ENCODE measurements at regions of chr18 and their contacts with region 1.

Region 1: GRCh38 chr18:62584241-62585120 is 61.7 kb downstream of the ZCCHC2 start:
- DNase-seq: peak; percentile 93
- H3K4me3 Mint-ChIP-seq: peak overlapping the region; percentile 2
- H3K27ac Mint-ChIP-seq: peak overlapping the region; percentile 92
- H3K4me1 Mint-ChIP-seq: peaks cover 42% of the 10 kb centered on the region
- H3K27me3 Mint-ChIP-seq: no peaks in the 10 kb centered on the region

Region 2: DNA sequence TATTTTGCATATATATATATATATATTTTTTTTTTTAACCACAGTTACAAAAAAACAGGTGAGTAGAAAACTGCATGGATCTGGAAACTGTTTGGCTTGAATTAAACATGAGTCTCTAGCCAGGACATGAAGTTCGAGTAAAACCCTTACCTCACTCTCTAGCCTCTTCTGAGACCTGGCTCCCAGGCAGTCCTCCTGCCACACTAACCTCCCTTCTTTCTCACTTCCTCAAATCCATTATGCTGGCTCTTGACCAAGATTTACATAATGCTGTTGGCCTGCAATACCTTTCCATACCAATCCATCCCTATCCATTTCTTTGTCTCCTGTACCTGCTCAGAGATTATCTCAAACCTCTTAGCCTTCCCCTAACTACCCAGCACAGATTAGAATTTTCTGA is 431.6 kb before region 1 on chr18:
- CTCF ChIA-PET with region 1: no interaction called
- intact Hi-C with region 1: no loop called
- DNase-seq: no peak
- H3K4me3 Mint-ChIP-seq: no peak overlapping the region
- H3K27ac Mint-ChIP-seq: no peak overlapping the region
- H3K4me1 Mint-ChIP-seq: no peaks in the 10 kb centered on the region
- H3K27me3 Mint-ChIP-seq: no peaks in the 10 kb centered on the region

Region 3: GRCh38 chr18:62186774-62187542 is 397.5 kb before region 1 on chr18 and contains the starts of genes PIGN and RELCH:
- CTCF ChIA-PET with region 1: interaction called, 3 read pairs
- intact Hi-C with region 1: loop called (anchors 1 kb)
- DNase-seq: peak; percentile 97
- H3K4me3 Mint-ChIP-seq: peak within 1 kb of the TSS; percentile 99
- H3K27ac Mint-ChIP-seq: peak within 1 kb of the TSS; percentile 90
- H3K4me1 Mint-ChIP-seq: peaks cover 45% of the 10 kb centered on the region
- H3K27me3 Mint-ChIP-seq: no peaks in the 10 kb centered on the region
- total RNA-seq, gene PIGN: 21.2 to 22.6 TPM
- total RNA-seq, gene RELCH: 15.7 to 16.3 TPM

Region 4: GRCh38 chr18:62324917-62325805 is 259.3 kb before region 1 on chr18 and contains the start of gene TNFRSF11A:
- CTCF ChIA-PET with region 1: interaction called, 5 read pairs
- intact Hi-C with region 1: loop called (anchors 1 kb)
- DNase-seq: peak; percentile 73
- H3K4me3 Mint-ChIP-seq: peak within 1 kb of the TSS; percentile 77
- H3K27ac Mint-ChIP-seq: peak within 1 kb of the TSS; percentile 28
- H3K4me1 Mint-ChIP-seq: peaks cover 19% of the 10 kb centered on the region
- H3K27me3 Mint-ChIP-seq: peaks cover 70% of the 10 kb centered on the region
- total RNA-seq, gene TNFRSF11A: 3.1 to 3.5 TPM

Region 5: DNA sequence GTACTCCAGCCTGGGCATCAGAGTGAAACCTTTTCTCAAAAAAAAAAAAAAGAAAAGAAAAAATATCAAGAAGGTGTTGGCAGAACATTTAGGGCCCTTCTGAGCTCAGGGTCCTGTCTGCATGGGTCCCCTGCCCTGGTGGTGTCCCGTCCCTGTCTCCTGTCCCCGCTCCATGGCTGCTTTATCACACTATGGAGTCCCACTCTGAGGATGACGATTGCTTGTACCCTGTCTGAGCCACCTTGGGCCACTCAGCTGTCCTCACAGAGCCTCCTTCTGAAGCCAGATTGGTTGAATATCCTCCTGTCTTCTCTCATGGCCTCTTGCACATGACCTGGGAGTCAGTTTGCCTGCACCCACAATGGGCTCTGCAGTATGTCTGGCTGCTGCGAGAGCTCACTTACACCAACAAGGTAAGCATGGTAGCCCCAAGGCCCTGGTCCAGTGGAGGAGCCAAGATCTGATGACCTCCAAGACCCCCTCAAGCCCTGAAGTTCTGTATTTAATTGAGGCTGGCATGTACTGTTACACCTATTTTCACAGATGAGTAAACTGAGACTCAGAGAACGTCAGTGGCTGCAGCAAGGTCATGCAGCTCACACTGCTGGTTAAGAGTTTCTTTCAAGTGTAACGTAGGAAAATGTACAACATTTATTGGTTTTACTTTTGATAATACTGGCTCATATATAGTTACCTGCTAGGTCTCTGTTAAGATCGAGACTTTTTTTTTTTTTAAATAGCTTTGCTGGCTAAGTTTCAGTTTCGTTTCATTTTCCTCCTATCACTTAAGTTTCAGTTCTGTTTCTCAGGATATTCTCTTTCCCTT is 78.6 kb before region 1 on chr18:
- CTCF ChIA-PET with region 1: no interaction called
- intact Hi-C with region 1: loop called (anchors 1 kb)
- DNase-seq: peak; percentile 63
- H3K4me3 Mint-ChIP-seq: peak overlapping the region; percentile 55
- H3K27ac Mint-ChIP-seq: peak overlapping the region; percentile 86
- H3K4me1 Mint-ChIP-seq: peaks cover 20% of the 10 kb centered on the region
- H3K27me3 Mint-ChIP-seq: no peaks in the 10 kb centered on the region

Region 6: DNA sequence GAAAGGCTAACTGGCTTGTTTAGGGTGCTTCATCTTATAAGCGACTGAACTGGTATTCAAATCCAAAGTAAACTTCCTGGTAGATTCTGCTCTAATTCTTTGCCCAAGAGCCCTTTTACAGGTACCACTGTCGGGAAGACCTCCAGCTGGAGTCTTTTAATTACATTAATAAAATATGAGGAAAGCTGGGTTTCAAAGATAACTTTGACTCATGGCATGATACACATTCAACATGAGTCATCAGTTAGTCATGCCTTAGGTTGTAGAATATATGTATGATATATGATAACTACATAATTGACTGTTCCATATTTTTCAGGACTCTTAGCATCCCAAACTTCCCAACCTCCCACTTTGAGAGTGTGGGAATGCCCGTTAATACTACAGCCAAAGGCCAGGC is 29.3 kb before region 1 on chr18:
- CTCF ChIA-PET with region 1: interaction called, 5 read pairs
- intact Hi-C with region 1: loop called (anchors 2 kb)
- DNase-seq: no peak
- H3K4me3 Mint-ChIP-seq: no peak overlapping the region
- H3K27ac Mint-ChIP-seq: no peak overlapping the region
- H3K4me1 Mint-ChIP-seq: peaks cover 24% of the 10 kb centered on the region
- H3K27me3 Mint-ChIP-seq: no peaks in the 10 kb centered on the region

Region 7: DNA sequence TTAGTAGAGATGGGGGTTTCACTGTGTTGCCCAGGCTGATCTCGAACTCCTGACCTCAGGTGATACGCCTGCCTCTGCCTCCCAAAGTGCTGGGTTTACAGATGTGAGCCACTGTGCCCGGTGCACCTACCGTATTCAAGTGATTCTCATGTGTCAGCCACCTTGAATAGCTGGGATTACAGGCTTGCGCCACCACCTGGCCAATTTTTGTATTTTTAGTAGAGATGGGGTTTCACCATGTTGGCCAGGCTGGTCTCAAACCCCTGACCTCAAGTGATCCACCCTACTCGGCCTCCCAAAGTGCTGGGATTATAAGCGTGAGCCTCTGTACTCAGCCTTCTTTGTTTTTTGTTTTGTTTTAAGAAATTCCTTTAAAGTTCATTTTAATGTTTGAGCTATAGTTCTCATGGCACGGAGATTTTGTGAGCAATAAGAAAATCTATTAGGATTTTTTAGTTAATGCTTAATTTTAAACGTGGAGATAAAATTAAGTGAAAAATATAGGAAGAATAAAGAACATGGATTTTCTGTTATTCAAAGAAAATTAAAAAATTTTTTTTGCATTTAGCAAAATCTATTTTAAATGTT is 373.5 kb after region 1 on chr18:
- CTCF ChIA-PET with region 1: interaction called, 3 read pairs
- intact Hi-C with region 1: loop called (anchors 1 kb)
- DNase-seq: peak; percentile 74
- H3K4me3 Mint-ChIP-seq: no peak overlapping the region
- H3K27ac Mint-ChIP-seq: no peak overlapping the region
- H3K4me1 Mint-ChIP-seq: peaks cover 12% of the 10 kb centered on the region
- H3K27me3 Mint-ChIP-seq: no peaks in the 10 kb centered on the region

Region 8: GRCh38 chr18:63216516-63217311 is 632.2 kb after region 1 on chr18:
- CTCF ChIA-PET with region 1: no interaction called
- intact Hi-C with region 1: loop called (anchors 10 kb)
- DNase-seq: peak; percentile 48
- H3K4me3 Mint-ChIP-seq: peak overlapping the region; percentile 64
- H3K27ac Mint-ChIP-seq: peak overlapping the region; percentile 94
- H3K4me1 Mint-ChIP-seq: peaks cover 89% of the 10 kb centered on the region
- H3K27me3 Mint-ChIP-seq: no peaks in the 10 kb centered on the region